Caco-2 (cell line): ENCODE measurements at regions of chr10 and their contacts with region 1.

Region 1: GRCh38 chr10:101602761-101603398 is 14.8 kb downstream of the DPCD start:
- DNase-seq: peak; percentile 82 to 90
- H3K4me3 ChIP-seq: no peak overlapping the region
- H3K4me3 Mint-ChIP-seq: no peak overlapping the region
- H3K27ac Mint-ChIP-seq: no peak overlapping the region
- H3K4me1 ChIP-seq: no peaks in the 10 kb centered on the region
- H3K4me1 Mint-ChIP-seq: peaks cover 8% of the 10 kb centered on the region
- H3K27me3 ChIP-seq: no peaks in the 10 kb centered on the region
- H3K27me3 Mint-ChIP-seq: no peaks in the 10 kb centered on the region
- CTCF ChIP-seq: peak; percentile 91 to 94

Region 2: GRCh38 chr10:101587725-101588653 is 14.9 kb before region 1 on chr10 and contains the starts of genes DPCD and POLL:
- CTCF ChIA-PET with region 1: interaction called, 21 read pairs
- POLR2A ChIA-PET with region 1: interaction called, 6 read pairs
- intact Hi-C with region 1: no loop called
- DNase-seq: peak; percentile 94 to 96
- H3K4me3 ChIP-seq: peak within 1 kb of the TSS; percentile 85
- H3K4me3 Mint-ChIP-seq: peak within 1 kb of the TSS; percentile 95
- H3K27ac Mint-ChIP-seq: peak within 1 kb of the TSS; percentile 94
- H3K4me1 ChIP-seq: no peaks in the 10 kb centered on the region
- H3K4me1 Mint-ChIP-seq: peaks cover 11% of the 10 kb centered on the region
- H3K27me3 ChIP-seq: no peaks in the 10 kb centered on the region
- H3K27me3 Mint-ChIP-seq: no peaks in the 10 kb centered on the region
- CTCF ChIP-seq: no peak
- total RNA-seq, gene DPCD: 13.1 and 14.0 TPM in 2 replicates
- total RNA-seq, gene POLL: 34.7 and 35.5 TPM in 2 replicates

Region 3: DNA sequence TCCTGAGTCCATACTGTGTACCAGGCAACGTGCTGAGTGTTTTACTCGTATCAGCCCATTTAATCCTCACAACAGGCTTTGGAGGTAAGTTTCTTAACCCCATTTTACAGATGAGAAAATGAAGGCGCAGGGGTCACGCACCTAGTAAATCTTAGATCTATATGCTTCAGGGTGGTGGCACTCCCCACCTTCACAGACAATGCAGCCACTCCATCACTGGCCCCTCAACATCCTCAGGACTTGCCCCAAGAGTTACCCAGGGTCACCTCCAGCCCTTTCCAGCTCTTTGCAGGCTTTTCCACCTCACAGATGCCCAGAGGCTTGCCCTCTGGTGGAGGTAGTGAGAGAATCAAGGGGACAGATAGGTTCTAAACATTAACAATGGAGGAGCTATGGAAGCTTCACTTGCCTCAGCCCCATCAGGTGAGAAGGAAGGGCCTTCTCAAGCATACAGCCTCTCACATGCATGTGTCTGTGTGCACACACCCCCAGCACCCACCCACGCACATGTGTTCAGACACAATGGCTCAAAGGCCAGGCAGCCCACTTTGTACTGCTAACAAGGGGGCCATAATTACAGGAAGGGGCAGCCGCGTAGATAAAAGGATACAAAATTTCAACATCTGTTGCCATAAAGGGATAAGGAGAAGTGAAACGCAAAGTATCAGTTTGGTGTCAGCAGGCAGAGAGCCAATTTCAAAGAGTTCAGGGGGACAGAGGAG is 14.4 kb after region 1 on chr10:
- CTCF ChIA-PET with region 1: interaction called, 10 read pairs
- POLR2A ChIA-PET with region 1: no interaction called
- intact Hi-C with region 1: no loop called
- DNase-seq: no peak
- H3K4me3 ChIP-seq: no peak overlapping the region
- H3K4me3 Mint-ChIP-seq: no peak overlapping the region
- H3K27ac Mint-ChIP-seq: no peak overlapping the region
- H3K4me1 ChIP-seq: no peaks in the 10 kb centered on the region
- H3K4me1 Mint-ChIP-seq: no peaks in the 10 kb centered on the region
- H3K27me3 ChIP-seq: no peaks in the 10 kb centered on the region
- H3K27me3 Mint-ChIP-seq: no peaks in the 10 kb centered on the region
- CTCF ChIP-seq: peak in 1 of 2 experiments; percentile 1

Region 4: GRCh38 chr10:101693978-101694673 is 91.2 kb after region 1 on chr10:
- CTCF ChIA-PET with region 1: interaction called, 11 read pairs
- POLR2A ChIA-PET with region 1: no interaction called
- intact Hi-C with region 1: no loop called
- DNase-seq: peak; percentile 52 to 74
- H3K4me3 ChIP-seq: peak overlapping the region; percentile 85
- H3K4me3 Mint-ChIP-seq: peak overlapping the region; percentile 97
- H3K27ac Mint-ChIP-seq: peak overlapping the region; percentile 99
- H3K4me1 ChIP-seq: peaks cover 13% of the 10 kb centered on the region; the same call in 1 of the 2 replicates
- H3K4me1 Mint-ChIP-seq: peaks cover 6% of the 10 kb centered on the region
- H3K27me3 ChIP-seq: no peaks in the 10 kb centered on the region
- H3K27me3 Mint-ChIP-seq: no peaks in the 10 kb centered on the region
- CTCF ChIP-seq: no peak

Region 5: GRCh38 chr10:101782811-101783735 is 180.2 kb after region 1 on chr10 and contains the start of gene NPM3:
- CTCF ChIA-PET with region 1: interaction called, 126 read pairs
- POLR2A ChIA-PET with region 1: interaction called, 4 read pairs
- intact Hi-C with region 1: loop called (anchors 1 kb)
- DNase-seq: peak; percentile 87 to 89
- H3K4me3 ChIP-seq: peak within 1 kb of the TSS; percentile 96
- H3K4me3 Mint-ChIP-seq: peak within 1 kb of the TSS; percentile 93
- H3K27ac Mint-ChIP-seq: peak within 1 kb of the TSS; percentile 97
- H3K4me1 ChIP-seq: peaks cover 10% of the 10 kb centered on the region
- H3K4me1 Mint-ChIP-seq: peaks cover 8% of the 10 kb centered on the region
- H3K27me3 ChIP-seq: no peaks in the 10 kb centered on the region
- H3K27me3 Mint-ChIP-seq: no peaks in the 10 kb centered on the region
- CTCF ChIP-seq: no peak
- total RNA-seq, gene NPM3: 92.6 and 103 TPM in 2 replicates

Region 6: GRCh38 chr10:102072673-102073527 is 470.0 kb after region 1 on chr10:
- CTCF ChIA-PET with region 1: no interaction called
- POLR2A ChIA-PET with region 1: no interaction called
- intact Hi-C with region 1: loop called (anchors 2 kb)
- DNase-seq: peak; percentile 81 to 85
- H3K4me3 ChIP-seq: no peak overlapping the region
- H3K4me3 Mint-ChIP-seq: no peak overlapping the region
- H3K27ac Mint-ChIP-seq: no peak overlapping the region
- H3K4me1 ChIP-seq: no peaks in the 10 kb centered on the region
- H3K4me1 Mint-ChIP-seq: no peaks in the 10 kb centered on the region
- H3K27me3 ChIP-seq: no peaks in the 10 kb centered on the region
- H3K27me3 Mint-ChIP-seq: no peaks in the 10 kb centered on the region
- CTCF ChIP-seq: peak; percentile 95